ENCODE measurements at regions of chr3 and their contacts with region 1.

Region 1: GRCh38 chr3:141875374-141875892 is 1.0 kb upstream of the ATP1B3 start:
- DNase-seq: peak; percentile 92
- ATAC-seq: peak; percentile 73
- H3K4me3 Mint-ChIP-seq: peak overlapping the region; percentile 93
- H3K27ac Mint-ChIP-seq: peak overlapping the region; percentile 91
- H3K4me1 Mint-ChIP-seq: peaks cover 23% of the 10 kb centered on the region
- H3K27me3 Mint-ChIP-seq: no peaks in the 10 kb centered on the region

Region 2: GRCh38 chr3:141487521-141488252 is 387.7 kb before region 1 on chr3:
- CTCF ChIA-PET with region 1: no interaction called
- POLR2A ChIA-PET with region 1: no interaction called
- intact Hi-C with region 1: loop called (anchors 1 to 10 kb)
- DNase-seq: peak; percentile 93
- ATAC-seq: peak; percentile 69
- H3K4me3 Mint-ChIP-seq: peak overlapping the region; percentile 77
- H3K27ac Mint-ChIP-seq: peak overlapping the region; percentile 94
- H3K4me1 Mint-ChIP-seq: peaks cover 64% of the 10 kb centered on the region
- H3K27me3 Mint-ChIP-seq: no peaks in the 10 kb centered on the region

Region 3: GRCh38 chr3:141834296-141834695 is 41.1 kb before region 1 on chr3:
- CTCF ChIA-PET with region 1: no interaction called
- POLR2A ChIA-PET with region 1: no interaction called
- intact Hi-C with region 1: no loop called
- DNase-seq: no peak
- ATAC-seq: peak; percentile 36
- H3K4me3 Mint-ChIP-seq: no peak overlapping the region
- H3K27ac Mint-ChIP-seq: no peak overlapping the region
- H3K4me1 Mint-ChIP-seq: no peaks in the 10 kb centered on the region
- H3K27me3 Mint-ChIP-seq: no peaks in the 10 kb centered on the region

Region 4: DNA sequence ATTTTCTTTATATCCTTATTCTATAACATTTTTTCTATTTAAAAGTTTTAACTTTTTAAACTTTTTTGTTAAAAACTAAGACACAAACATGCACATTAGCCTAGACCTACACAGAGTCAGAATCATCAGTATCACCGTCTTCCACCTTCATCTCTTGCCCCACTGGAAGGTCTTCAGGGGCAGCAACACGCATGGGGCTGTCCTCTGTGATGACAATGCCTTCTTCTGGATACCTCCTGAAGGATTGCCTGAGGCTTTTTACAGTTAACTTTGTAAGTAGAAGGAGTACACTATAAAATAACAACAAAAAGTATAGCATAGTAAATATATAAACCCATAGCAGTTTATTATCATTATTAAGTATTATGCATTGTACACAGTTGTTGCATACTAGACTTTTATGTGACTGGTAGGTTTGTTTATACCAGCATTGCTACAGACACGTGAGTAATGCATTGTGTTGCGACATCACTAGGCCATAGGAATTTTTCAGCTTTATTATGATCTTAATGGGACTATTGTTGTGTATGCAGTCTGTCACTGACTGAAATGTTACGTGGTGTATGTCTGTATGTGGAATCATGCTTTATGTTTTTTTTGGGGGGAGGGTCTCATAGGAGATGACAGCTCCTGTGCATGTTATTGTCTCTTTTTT is 19.2 kb after region 1 on chr3:
- CTCF ChIA-PET with region 1: interaction called, 6 read pairs
- POLR2A ChIA-PET with region 1: no interaction called
- intact Hi-C with region 1: loop called in 1 of 2 experiments (anchors 1 kb)
- DNase-seq: no peak
- ATAC-seq: no peak
- H3K4me3 Mint-ChIP-seq: no peak overlapping the region
- H3K27ac Mint-ChIP-seq: no peak overlapping the region
- H3K4me1 Mint-ChIP-seq: peaks cover 50% of the 10 kb centered on the region
- H3K27me3 Mint-ChIP-seq: no peaks in the 10 kb centered on the region

Region 5: DNA sequence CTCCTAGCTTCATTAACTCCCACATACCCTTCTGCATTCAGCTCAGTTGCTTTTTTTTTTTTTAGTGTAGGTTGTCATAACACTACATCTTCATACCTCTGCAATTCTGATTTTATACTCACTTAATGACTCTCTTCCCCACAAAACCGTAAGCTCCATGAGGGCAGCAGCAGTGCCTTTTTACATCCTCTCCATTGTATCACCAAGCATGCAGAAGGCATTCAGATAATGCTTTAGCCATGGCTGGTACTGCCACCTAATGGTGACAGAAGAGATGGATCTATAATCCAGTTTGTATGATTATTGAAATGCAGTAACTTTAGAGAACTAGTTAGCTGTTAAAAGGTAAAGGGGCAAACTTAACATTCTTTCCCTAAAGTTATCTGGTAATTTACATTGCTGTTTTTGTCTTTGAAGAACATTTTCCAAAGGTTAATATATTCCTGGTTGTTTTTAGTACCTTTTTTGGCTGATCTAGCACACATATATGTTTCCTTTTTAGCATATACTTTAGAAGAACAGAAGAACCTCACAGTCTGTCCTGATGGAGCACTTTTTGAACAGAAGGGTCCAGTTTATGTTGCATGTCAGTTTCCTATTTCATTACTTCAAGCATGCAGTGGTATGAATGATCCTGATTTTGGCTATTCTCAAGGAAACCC is 37.8 kb after region 1 on chr3:
- CTCF ChIA-PET with region 1: interaction called, 12 read pairs
- POLR2A ChIA-PET with region 1: no interaction called
- intact Hi-C with region 1: loop called (anchors 2 kb)
- DNase-seq: peak; percentile 70
- ATAC-seq: peak; percentile 93
- H3K4me3 Mint-ChIP-seq: no peak overlapping the region
- H3K27ac Mint-ChIP-seq: no peak overlapping the region
- H3K4me1 Mint-ChIP-seq: no peaks in the 10 kb centered on the region
- H3K27me3 Mint-ChIP-seq: no peaks in the 10 kb centered on the region

Region 6: DNA sequence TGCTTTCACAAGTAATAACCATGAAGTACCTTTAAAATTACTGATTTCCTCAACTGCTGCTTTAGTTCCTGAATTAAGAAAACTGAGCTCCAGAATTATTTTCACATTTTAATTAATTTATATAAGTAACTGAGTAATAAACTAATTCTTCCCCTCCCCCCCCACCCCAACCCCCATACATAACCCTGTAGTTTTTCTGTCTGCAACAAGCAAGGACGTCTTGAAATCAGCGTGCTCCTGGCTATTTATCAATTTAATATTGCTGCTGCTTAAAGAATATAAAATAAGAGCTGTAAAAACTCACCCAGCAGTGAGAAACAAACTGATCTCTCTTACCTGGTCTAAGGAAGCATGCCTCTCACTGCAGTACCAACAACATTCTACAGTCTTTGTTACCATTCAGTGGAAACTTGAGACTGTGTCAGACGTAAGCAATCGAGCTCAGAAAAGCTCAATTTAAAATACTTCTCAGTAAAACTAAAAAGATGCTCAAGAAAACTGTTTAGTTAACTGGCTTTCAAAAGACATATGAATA is 152.9 kb after region 1 on chr3:
- CTCF ChIA-PET with region 1: interaction called, 3 read pairs
- POLR2A ChIA-PET with region 1: no interaction called
- intact Hi-C with region 1: loop called in 1 of 2 experiments (anchors 5 kb)
- DNase-seq: peak; percentile 42
- ATAC-seq: peak; percentile 74
- H3K4me3 Mint-ChIP-seq: peak overlapping the region; percentile 83
- H3K27ac Mint-ChIP-seq: peak overlapping the region; percentile 84
- H3K4me1 Mint-ChIP-seq: peaks cover 32% of the 10 kb centered on the region
- H3K27me3 Mint-ChIP-seq: no peaks in the 10 kb centered on the region

Region 7: GRCh38 chr3:142159083-142159740 is 283.8 kb after region 1 on chr3:
- CTCF ChIA-PET with region 1: no interaction called
- POLR2A ChIA-PET with region 1: no interaction called
- intact Hi-C with region 1: no loop called
- DNase-seq: no peak
- ATAC-seq: no peak
- H3K4me3 Mint-ChIP-seq: no peak overlapping the region
- H3K27ac Mint-ChIP-seq: no peak overlapping the region
- H3K4me1 Mint-ChIP-seq: no peaks in the 10 kb centered on the region
- H3K27me3 Mint-ChIP-seq: no peaks in the 10 kb centered on the region

Region 8: GRCh38 chr3:142578327-142579223 is 703.1 kb after region 1 on chr3 and contains the start of gene ATR:
- CTCF ChIA-PET with region 1: no interaction called
- POLR2A ChIA-PET with region 1: no interaction called
- intact Hi-C with region 1: loop called in 1 of 2 experiments (anchors 2 kb)
- DNase-seq: peak; percentile 98
- ATAC-seq: peak; percentile 96
- H3K4me3 Mint-ChIP-seq: peak within 1 kb of the TSS; percentile 97
- H3K27ac Mint-ChIP-seq: peak within 1 kb of the TSS; percentile 99
- H3K4me1 Mint-ChIP-seq: peaks cover 43% of the 10 kb centered on the region
- H3K27me3 Mint-ChIP-seq: no peaks in the 10 kb centered on the region
- total RNA-seq, gene ATR: 36.1 to 39.9 TPM

Measured in activated CD4-positive, alpha-beta T cell treated with anti-CD3 and anti-CD28 coated beads for 36 hours (primary cell).